Activated CD4-positive, alpha-beta memory T cell treated with anti-CD3 and anti-CD28 coated beads for 36 hours (primary cell): ENCODE measurements at regions of chr10 and their contacts with region 1.

Region 1: DNA sequence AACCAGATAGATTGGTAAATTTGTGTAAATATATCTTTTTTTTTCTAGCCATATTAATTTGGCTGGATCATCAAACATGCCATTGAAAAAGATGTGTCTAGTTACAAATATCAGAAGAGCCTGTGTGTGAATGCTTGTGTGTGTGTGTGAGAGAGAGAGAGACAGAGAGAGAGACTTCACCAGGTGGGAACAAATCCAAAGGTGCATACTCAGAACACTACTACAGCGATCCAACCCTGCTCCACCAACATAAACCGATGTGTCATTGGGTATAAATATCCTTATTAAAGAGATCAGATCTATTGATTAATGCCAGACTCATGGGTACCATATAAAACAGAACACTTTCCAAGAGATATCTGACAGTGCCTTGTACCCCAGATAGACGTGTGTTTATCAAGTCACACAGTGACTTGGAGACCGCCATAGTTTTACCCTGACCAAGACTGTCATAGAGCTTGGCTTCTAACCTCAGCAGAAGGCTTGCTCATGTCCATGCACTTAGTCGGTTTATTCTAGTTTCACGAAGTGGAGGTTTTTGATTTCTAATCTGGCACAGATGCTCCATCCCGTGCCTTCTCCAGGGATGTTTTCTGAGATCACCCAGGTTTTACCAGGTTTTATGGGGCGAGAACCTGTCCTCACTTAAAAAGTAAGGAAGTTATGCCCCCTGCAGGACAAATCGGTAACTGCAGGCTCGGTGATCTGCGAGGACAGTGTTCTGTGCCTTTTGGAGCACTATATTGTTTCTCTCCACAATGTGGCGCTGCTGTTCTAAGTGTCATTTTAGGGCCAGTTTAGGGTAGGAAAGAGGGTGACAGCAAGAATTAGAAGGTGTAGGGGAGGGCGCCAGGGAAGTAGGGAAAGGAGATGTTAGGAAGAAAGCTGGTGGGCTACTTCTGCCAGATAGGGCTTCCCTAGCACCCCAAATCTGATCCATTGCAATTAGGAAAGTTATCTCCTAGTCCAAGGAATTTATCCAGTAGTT is 29.3 kb upstream of the WNT8B start:
- DNase-seq: peak; percentile 97
- H3K4me3 Mint-ChIP-seq: no peak overlapping the region
- H3K27ac Mint-ChIP-seq: peak overlapping the region; percentile 2
- H3K4me1 Mint-ChIP-seq: peaks cover 2% of the 10 kb centered on the region
- H3K27me3 Mint-ChIP-seq: no peaks in the 10 kb centered on the region

Region 2: DNA sequence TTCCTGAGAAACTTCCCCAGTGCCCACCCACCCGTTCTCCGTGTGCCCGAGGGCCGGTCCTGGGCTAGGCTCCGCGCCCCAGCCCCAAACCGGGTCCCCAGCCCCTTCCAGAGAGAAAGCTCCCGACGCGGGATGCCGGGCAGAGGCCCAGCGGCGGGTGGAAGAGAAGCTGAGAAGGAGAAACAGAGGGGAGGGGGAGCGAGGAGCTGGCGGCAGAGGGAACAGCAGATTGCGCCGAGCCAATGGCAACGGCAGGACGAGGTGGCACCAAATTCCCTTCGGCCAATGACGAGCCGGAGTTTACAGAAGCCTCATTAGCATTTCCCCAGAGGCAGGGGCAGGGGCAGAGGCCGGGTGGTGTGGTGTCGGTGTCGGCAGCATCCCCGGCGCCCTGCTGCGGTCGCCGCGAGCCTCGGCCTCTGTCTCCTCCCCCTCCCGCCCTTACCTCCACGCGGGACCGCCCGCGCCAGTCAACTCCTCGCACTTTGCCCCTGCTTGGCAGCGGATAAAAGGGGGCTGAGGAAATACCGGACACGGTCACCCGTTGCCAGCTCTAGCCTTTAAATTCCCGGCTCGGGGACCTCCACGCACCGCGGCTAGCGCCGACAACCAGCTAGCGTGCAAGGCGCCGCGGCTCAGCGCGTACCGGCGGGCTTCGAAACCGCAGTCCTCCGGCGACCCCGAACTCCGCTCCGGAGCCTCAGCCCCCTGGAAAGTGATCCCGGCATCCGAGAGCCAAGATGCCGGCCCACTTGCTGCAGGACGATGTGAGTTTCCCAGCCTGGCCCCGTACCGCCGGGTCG is 86.6 kb before region 1 on chr10 and contains the start of gene SCD:
- CTCF ChIA-PET with region 1: interaction called, 288 read pairs
- POLR2A ChIA-PET with region 1: interaction called, 3 read pairs
- intact Hi-C with region 1: loop called (anchors 1 kb)
- DNase-seq: peak; percentile 93
- H3K4me3 Mint-ChIP-seq: peak within 1 kb of the TSS; percentile 87
- H3K27ac Mint-ChIP-seq: peak within 1 kb of the TSS; percentile 81
- H3K4me1 Mint-ChIP-seq: peaks cover 39% of the 10 kb centered on the region
- H3K27me3 Mint-ChIP-seq: peaks cover 2% of the 10 kb centered on the region
- total RNA-seq, gene SCD: 156 to 158 TPM

Region 3: DNA sequence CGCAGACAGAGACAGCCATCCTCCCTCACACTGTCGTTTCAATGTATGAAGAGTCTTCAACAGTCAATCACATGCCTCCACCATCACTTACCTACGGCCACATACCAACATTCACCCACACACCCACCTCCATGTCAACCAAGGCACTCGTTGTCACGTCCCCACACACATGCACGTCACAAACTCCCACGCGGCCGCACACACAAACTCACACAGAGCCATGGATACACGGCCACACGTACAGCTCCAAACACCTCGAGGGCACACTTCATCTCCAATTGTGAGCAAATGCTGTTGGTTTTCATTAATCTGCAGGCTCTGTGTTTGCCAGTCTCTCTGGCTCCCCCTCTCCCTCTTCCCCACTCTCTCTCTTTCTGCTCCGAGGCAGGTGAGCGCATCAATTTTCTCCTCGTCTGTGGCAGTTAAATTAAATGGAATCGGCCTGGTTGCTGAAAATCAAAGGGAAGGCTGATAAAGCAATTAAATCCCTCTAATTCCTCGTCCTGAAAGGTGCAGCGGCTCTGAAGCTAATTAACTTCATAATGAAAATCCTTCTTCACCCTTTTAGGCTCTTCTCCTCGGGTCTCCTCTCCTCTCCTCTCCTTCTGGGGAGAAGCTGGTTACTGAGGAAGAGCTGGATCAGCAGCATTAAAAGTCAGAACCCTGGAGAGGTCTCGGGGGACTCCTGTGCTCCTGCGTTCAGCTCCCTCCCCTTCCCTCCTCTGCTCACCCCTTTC is 425.4 kb after region 1 on chr10:
- CTCF ChIA-PET with region 1: no interaction called
- POLR2A ChIA-PET with region 1: no interaction called
- intact Hi-C with region 1: no loop called
- DNase-seq: no peak
- H3K4me3 Mint-ChIP-seq: no peak overlapping the region
- H3K27ac Mint-ChIP-seq: no peak overlapping the region
- H3K4me1 Mint-ChIP-seq: no peaks in the 10 kb centered on the region
- H3K27me3 Mint-ChIP-seq: peaks cover 52% of the 10 kb centered on the region